ENCODE measurements at regions of chr3 and their contacts with region 1.

Region 1: GRCh38 chr3:126982471-126983175 is at the start of gene PLXNA1:
- DNase-seq: peak; percentile 87
- H3K4me3 Mint-ChIP-seq: peak within 1 kb of the TSS; percentile 81
- H3K27ac Mint-ChIP-seq: peak within 1 kb of the TSS; percentile 90
- H3K4me1 Mint-ChIP-seq: peaks cover 23% of the 10 kb centered on the region
- H3K27me3 Mint-ChIP-seq: peaks cover 4% of the 10 kb centered on the region
- total RNA-seq, gene PLXNA1: 22.1 and 25.5 TPM in 2 replicates

Region 2: DNA sequence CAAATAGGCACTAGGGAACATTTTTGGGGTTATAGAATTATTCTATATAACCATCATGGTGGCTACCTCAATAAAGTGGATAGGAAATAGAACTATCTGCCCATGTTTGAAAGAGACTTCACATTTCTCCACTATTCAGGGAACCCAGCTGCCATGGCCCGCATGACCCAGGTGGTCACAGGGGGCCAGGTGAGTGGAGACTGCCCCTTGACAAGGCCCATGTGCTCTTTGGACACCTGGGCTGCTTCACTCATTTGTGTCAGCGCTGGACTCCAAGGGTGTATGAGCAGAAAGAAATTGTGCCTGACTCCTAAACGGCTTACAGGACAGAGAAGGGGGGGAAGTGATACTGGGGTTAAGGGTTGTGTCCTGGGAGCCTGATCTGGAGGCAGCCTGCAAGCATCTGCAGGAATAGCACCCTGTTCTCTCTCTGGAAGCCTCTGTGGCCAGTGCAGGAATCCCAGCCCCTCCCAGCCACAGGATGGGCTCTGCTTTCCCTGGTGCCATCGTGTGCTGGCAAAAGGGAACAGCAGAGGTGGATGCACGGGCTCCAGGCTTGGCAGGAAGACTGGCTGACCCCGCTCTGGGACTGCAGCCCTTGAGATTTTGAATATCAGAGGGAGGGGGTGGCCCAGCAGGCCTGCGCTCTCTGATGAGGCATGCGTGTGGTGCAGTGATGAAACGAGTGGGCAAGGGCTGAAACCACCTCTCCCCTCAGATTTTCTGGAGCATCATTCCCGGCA is 414.8 kb before region 1 on chr3:
- intact Hi-C with region 1: no loop called
- DNase-seq: no peak
- H3K4me3 Mint-ChIP-seq: no peak overlapping the region
- H3K27ac Mint-ChIP-seq: no peak overlapping the region
- H3K4me1 Mint-ChIP-seq: no peaks in the 10 kb centered on the region
- H3K27me3 Mint-ChIP-seq: peaks cover 13% of the 10 kb centered on the region

Region 3: GRCh38 chr3:126679318-126679751 is 303.3 kb before region 1 on chr3:
- intact Hi-C with region 1: loop called (anchors 1 kb)
- DNase-seq: peak; percentile 61
- H3K4me3 Mint-ChIP-seq: peak overlapping the region; percentile 21
- H3K27ac Mint-ChIP-seq: no peak overlapping the region
- H3K4me1 Mint-ChIP-seq: peaks cover 4% of the 10 kb centered on the region
- H3K27me3 Mint-ChIP-seq: no peaks in the 10 kb centered on the region

Region 4: GRCh38 chr3:126752303-126752842 is 230.2 kb before region 1 on chr3:
- intact Hi-C with region 1: loop called (anchors 1 kb)
- DNase-seq: peak; percentile 46
- H3K4me3 Mint-ChIP-seq: no peak overlapping the region
- H3K27ac Mint-ChIP-seq: no peak overlapping the region
- H3K4me1 Mint-ChIP-seq: peaks cover 8% of the 10 kb centered on the region
- H3K27me3 Mint-ChIP-seq: no peaks in the 10 kb centered on the region

Region 5: GRCh38 chr3:126911162-126912026 is 71.2 kb before region 1 on chr3:
- intact Hi-C with region 1: loop called (anchors 1 kb)
- DNase-seq: peak; percentile 81
- H3K4me3 Mint-ChIP-seq: peak overlapping the region; percentile 67
- H3K27ac Mint-ChIP-seq: peak overlapping the region; percentile 73
- H3K4me1 Mint-ChIP-seq: peaks cover 62% of the 10 kb centered on the region
- H3K27me3 Mint-ChIP-seq: no peaks in the 10 kb centered on the region

Region 6: DNA sequence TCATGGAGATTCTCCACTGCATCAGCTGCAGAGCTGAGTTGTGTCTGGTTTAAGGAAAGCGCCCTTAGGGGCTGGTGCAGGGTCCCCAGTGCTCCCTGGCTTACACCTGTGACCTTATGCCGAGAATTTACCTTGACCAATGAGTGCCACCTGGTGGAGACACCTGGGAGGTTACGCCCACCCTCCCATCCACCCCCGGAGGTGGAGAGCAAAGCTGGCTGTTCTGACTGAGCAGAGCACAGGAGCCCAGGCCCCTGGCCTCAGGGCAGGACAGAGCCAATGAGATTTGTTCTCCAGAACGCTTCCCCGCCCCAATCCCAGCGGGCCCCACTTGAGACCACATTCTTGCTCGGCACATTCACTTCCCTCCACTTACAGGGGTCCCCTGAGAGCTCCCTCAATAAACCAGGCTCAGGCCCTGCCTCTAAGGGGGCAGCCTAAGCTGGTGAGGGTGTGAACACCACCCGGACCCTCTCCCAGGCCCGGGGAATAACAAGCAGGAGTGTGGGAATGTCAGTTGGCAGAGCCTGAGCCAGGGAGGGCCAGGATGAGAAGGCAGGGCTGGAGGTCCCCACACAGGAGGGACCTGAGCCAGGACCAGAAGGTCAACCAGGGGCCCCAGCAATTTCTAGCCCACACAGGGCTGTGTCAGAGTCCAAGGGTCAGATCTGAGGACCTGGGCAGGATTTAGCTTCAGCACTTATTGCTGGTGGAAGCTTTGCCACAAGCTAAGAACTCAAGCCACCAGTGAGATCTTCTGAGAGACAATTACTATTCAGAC is 490.8 kb after region 1 on chr3:
- intact Hi-C with region 1: loop called (anchors 5 kb)
- DNase-seq: no peak
- H3K4me3 Mint-ChIP-seq: no peak overlapping the region
- H3K27ac Mint-ChIP-seq: no peak overlapping the region
- H3K4me1 Mint-ChIP-seq: no peaks in the 10 kb centered on the region
- H3K27me3 Mint-ChIP-seq: peaks cover 8% of the 10 kb centered on the region